MCF 10A (cell line): ENCODE measurements at regions of chr4 and their contacts with region 1.

Region 1: GRCh38 chr4:47704693-47705325 is 133.1 kb downstream of the CORIN start:
- DNase-seq: peak; percentile 28
- H3K4me3 Mint-ChIP-seq: no peak overlapping the region
- H3K27ac Mint-ChIP-seq: no peak overlapping the region
- H3K4me1 Mint-ChIP-seq: peaks cover 5% of the 10 kb centered on the region
- H3K27me3 Mint-ChIP-seq: no peaks in the 10 kb centered on the region
- CTCF ChIP-seq: peak; percentile 46

Region 2: DNA sequence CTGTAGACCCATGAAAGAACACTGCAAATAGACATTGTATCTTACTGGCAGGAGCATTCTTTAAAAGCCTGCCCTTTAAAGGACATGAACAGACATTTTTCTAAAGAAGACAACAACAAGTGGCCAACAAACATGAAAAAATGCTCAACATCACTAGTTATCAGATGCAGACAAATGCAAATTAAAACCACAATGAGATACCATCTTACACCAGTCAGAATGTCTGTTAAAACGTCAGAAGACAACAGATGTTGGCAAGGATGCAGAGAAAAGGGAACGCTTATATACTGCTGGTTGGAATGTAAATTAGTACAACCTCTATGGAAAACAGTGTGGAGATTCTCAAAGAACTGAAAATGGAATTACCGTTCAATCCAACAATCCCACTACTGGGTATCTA is 142.5 kb before region 1 on chr4:
- CTCF ChIA-PET with region 1: no interaction called
- POLR2A ChIA-PET with region 1: no interaction called
- intact Hi-C with region 1: no loop called
- DNase-seq: no peak
- H3K4me3 Mint-ChIP-seq: no peak overlapping the region
- H3K27ac Mint-ChIP-seq: no peak overlapping the region
- H3K4me1 Mint-ChIP-seq: no peaks in the 10 kb centered on the region
- H3K27me3 Mint-ChIP-seq: no peaks in the 10 kb centered on the region
- CTCF ChIP-seq: no peak

Region 3: GRCh38 chr4:47686294-47686872 is 18.4 kb before region 1 on chr4:
- CTCF ChIA-PET with region 1: interaction called, 16 read pairs
- POLR2A ChIA-PET with region 1: no interaction called
- intact Hi-C with region 1: no loop called
- DNase-seq: peak; percentile 62
- H3K4me3 Mint-ChIP-seq: no peak overlapping the region
- H3K27ac Mint-ChIP-seq: no peak overlapping the region
- H3K4me1 Mint-ChIP-seq: no peaks in the 10 kb centered on the region
- H3K27me3 Mint-ChIP-seq: no peaks in the 10 kb centered on the region
- CTCF ChIP-seq: peak; percentile 61

Region 4: GRCh38 chr4:47715716-47716416 is 11.1 kb after region 1 on chr4:
- CTCF ChIA-PET with region 1: interaction called, 27 read pairs
- POLR2A ChIA-PET with region 1: interaction called, 5 read pairs
- intact Hi-C with region 1: no loop called
- DNase-seq: no peak
- H3K4me3 Mint-ChIP-seq: no peak overlapping the region
- H3K27ac Mint-ChIP-seq: no peak overlapping the region
- H3K4me1 Mint-ChIP-seq: peaks cover 6% of the 10 kb centered on the region
- H3K27me3 Mint-ChIP-seq: no peaks in the 10 kb centered on the region
- CTCF ChIP-seq: no peak

Region 5: DNA sequence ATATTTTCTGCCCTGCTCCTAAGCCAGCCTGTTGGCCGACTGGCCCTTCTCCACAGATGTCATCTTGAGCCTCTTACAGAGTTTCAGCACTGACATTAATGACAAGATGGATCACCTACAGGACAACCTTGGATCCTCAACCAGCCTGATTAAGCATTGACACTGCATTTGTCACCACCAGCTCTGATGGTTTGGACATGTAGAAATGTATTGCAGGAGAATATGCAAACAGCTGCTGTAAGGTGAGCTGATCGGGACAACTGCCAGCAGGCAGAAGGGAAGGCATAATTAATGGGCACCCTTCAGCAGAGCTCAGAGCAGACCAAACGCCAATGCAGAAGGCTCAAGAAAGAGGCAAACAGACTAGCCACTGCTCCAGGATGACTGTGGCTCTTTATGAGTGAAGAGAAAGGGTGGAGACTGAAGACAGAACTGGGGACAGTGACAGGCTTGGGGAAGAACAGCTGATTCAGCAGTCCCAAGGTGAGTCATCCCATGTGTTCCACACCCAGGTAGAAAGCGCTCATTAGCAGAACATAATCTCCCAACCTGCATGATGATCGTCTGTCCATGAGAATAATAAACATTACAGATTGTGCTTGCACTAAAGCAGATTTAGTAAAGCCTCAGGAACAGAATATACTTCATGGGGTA is 126.3 kb after region 1 on chr4:
- CTCF ChIA-PET with region 1: interaction called, 181 read pairs
- POLR2A ChIA-PET with region 1: interaction called, 6 read pairs
- intact Hi-C with region 1: loop called (anchors 1 kb)
- DNase-seq: peak; percentile 18
- H3K4me3 Mint-ChIP-seq: no peak overlapping the region
- H3K27ac Mint-ChIP-seq: no peak overlapping the region
- H3K4me1 Mint-ChIP-seq: peaks cover 13% of the 10 kb centered on the region
- H3K27me3 Mint-ChIP-seq: no peaks in the 10 kb centered on the region
- CTCF ChIP-seq: no peak